ENCODE measurements at regions of chr1 and their contacts with region 1.

Region 1: GRCh38 chr1:198620951-198621824 is 17.7 kb upstream of the PTPRC start:
- DNase-seq: peak; percentile 65
- ATAC-seq: peak; percentile 72
- H3K4me3 Mint-ChIP-seq: peak overlapping the region; percentile 79
- H3K27ac Mint-ChIP-seq: peak overlapping the region; percentile 97
- H3K4me1 Mint-ChIP-seq: peaks cover 86% of the 10 kb centered on the region
- H3K27me3 Mint-ChIP-seq: no peaks in the 10 kb centered on the region
- CTCF ChIP-seq: no peak

Region 2: DNA sequence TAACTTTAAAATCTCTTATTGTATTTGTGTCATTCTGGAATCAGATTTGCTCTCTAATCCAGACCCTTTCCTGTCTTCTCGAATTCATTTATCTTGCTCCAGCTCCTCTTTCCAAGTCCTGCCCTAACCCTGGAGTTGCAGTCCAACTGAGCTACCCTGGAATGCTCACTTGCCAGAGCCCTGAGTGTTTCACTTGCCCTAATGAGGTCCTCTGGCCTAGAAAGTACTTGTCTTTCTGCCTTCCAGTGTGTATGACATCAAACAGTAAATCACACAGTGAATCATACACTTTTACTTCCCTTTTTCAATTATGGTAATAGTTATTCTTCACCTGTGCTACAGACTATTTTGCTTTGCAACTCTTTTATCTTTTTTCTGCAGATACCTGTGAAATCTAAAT is 367.5 kb before region 1 on chr1:
- CTCF ChIA-PET with region 1: no interaction called
- POLR2A ChIA-PET with region 1: no interaction called
- intact Hi-C with region 1: loop called (anchors 10 kb)
- DNase-seq: no peak
- ATAC-seq: peak; percentile 94
- H3K4me3 Mint-ChIP-seq: peak overlapping the region; percentile 59
- H3K27ac Mint-ChIP-seq: peak overlapping the region; percentile 79
- H3K4me1 Mint-ChIP-seq: peaks cover 24% of the 10 kb centered on the region
- H3K27me3 Mint-ChIP-seq: no peaks in the 10 kb centered on the region
- CTCF ChIP-seq: no peak

Region 3: DNA sequence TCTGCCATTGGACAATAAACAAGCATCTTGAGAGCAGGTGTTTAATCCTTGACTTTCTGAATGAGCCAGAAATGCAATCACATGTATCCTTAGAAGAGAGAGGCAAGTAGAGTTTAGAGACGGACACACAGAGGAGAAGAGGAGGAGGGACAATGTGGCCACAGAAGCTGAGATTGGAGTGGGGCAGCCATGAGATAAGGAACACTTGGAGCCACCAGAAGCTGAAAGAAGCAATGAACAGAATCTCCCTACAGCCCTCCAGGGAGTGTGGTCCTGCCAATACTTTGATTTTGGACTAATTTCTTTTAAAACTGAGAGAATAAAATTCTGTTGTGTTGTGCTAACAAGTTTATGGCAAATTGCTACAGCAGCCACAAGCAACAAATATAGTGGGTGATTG is 221.7 kb before region 1 on chr1:
- CTCF ChIA-PET with region 1: no interaction called
- POLR2A ChIA-PET with region 1: no interaction called
- intact Hi-C with region 1: no loop called
- DNase-seq: no peak
- ATAC-seq: no peak
- H3K4me3 Mint-ChIP-seq: no peak overlapping the region
- H3K27ac Mint-ChIP-seq: no peak overlapping the region
- H3K4me1 Mint-ChIP-seq: no peaks in the 10 kb centered on the region
- H3K27me3 Mint-ChIP-seq: peaks cover 18% of the 10 kb centered on the region
- CTCF ChIP-seq: no peak

Region 4: DNA sequence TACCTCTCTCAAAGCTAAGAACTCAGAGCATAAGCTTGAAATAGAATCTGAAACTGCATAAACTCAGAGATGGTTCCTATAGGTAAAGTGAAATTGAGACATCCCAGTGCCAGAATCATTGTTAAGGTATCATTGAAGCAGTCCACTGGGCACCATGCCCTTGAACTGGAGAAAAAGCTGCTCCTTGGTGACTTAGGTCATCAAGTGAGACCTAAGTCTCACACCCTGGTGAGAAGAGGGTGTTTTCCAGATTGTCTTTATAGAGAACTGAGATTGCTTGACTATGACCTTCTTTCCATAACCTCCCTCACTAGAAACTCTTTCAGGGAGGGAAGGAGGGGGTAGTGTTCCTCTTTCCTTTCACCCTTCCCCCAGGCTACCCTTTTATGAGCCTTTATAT is 71.3 kb before region 1 on chr1:
- CTCF ChIA-PET with region 1: no interaction called
- POLR2A ChIA-PET with region 1: interaction called, 40 read pairs
- intact Hi-C with region 1: no loop called
- DNase-seq: no peak
- ATAC-seq: peak; percentile 90
- H3K4me3 Mint-ChIP-seq: peak overlapping the region; percentile 63
- H3K27ac Mint-ChIP-seq: peak overlapping the region; percentile 89
- H3K4me1 Mint-ChIP-seq: peaks cover 67% of the 10 kb centered on the region
- H3K27me3 Mint-ChIP-seq: no peaks in the 10 kb centered on the region
- CTCF ChIP-seq: no peak

Region 5: GRCh38 chr1:198598796-198599321 is 22.3 kb before region 1 on chr1:
- CTCF ChIA-PET with region 1: interaction called, 30 read pairs
- POLR2A ChIA-PET with region 1: interaction called, 121 read pairs
- intact Hi-C with region 1: loop called (anchors 1 kb)
- DNase-seq: peak; percentile 40
- ATAC-seq: peak; percentile 76
- H3K4me3 Mint-ChIP-seq: peak overlapping the region; percentile 90
- H3K27ac Mint-ChIP-seq: peak overlapping the region; percentile 99
- H3K4me1 Mint-ChIP-seq: peaks cover 90% of the 10 kb centered on the region
- H3K27me3 Mint-ChIP-seq: no peaks in the 10 kb centered on the region
- CTCF ChIP-seq: no peak

Region 6: GRCh38 chr1:198638894-198639635 is 17.9 kb after region 1 on chr1 and contains the start of gene PTPRC:
- CTCF ChIA-PET with region 1: interaction called, 46 read pairs
- POLR2A ChIA-PET with region 1: interaction called, 307 read pairs
- intact Hi-C with region 1: loop called (anchors 1 kb)
- DNase-seq: no peak
- ATAC-seq: peak; percentile 78
- H3K4me3 Mint-ChIP-seq: peak within 1 kb of the TSS; percentile 87
- H3K27ac Mint-ChIP-seq: peak within 1 kb of the TSS; percentile 95
- H3K4me1 Mint-ChIP-seq: peaks cover 68% of the 10 kb centered on the region
- H3K27me3 Mint-ChIP-seq: no peaks in the 10 kb centered on the region
- CTCF ChIP-seq: no peak
- total RNA-seq, gene PTPRC: 426 and 506 TPM in 2 replicates

Region 7: GRCh38 chr1:198662821-198663220 is 41.6 kb after region 1 on chr1:
- CTCF ChIA-PET with region 1: interaction called, 5 read pairs
- POLR2A ChIA-PET with region 1: interaction called, 30 read pairs
- intact Hi-C with region 1: no loop called
- DNase-seq: no peak
- ATAC-seq: no peak
- H3K4me3 Mint-ChIP-seq: peak overlapping the region; percentile 24
- H3K27ac Mint-ChIP-seq: peak overlapping the region; percentile 73
- H3K4me1 Mint-ChIP-seq: peaks cover 79% of the 10 kb centered on the region
- H3K27me3 Mint-ChIP-seq: no peaks in the 10 kb centered on the region
- CTCF ChIP-seq: no peak

Region 8: GRCh38 chr1:198756470-198756869 is 135.3 kb after region 1 on chr1:
- CTCF ChIA-PET with region 1: no interaction called
- POLR2A ChIA-PET with region 1: no interaction called
- intact Hi-C with region 1: no loop called
- DNase-seq: no peak
- ATAC-seq: no peak
- H3K4me3 Mint-ChIP-seq: no peak overlapping the region
- H3K27ac Mint-ChIP-seq: peak overlapping the region; percentile 0
- H3K4me1 Mint-ChIP-seq: peaks cover 30% of the 10 kb centered on the region
- H3K27me3 Mint-ChIP-seq: no peaks in the 10 kb centered on the region
- CTCF ChIP-seq: no peak

Region 9: DNA sequence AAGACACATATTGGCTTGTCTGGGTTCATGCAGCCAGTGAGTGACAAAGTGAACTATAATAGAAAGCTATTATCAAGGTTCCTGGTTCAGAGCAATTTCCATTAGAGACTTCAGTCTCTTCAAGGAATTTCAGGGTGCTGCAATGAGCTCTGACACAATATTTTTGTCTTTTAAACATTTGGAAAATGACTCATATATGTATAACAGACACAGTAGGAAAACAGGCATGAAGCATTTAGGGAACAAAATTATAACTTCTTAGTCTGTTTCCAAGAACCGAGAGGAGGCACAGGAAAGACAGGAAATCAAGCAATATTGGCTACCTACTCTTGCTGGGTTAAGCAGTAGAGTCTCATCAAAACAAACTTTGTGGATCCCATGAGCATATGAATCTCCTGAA is 188.1 kb after region 1 on chr1:
- CTCF ChIA-PET with region 1: no interaction called
- POLR2A ChIA-PET with region 1: no interaction called
- intact Hi-C with region 1: no loop called
- DNase-seq: no peak
- ATAC-seq: no peak
- H3K4me3 Mint-ChIP-seq: no peak overlapping the region
- H3K27ac Mint-ChIP-seq: no peak overlapping the region
- H3K4me1 Mint-ChIP-seq: no peaks in the 10 kb centered on the region
- H3K27me3 Mint-ChIP-seq: peaks cover 1% of the 10 kb centered on the region
- CTCF ChIP-seq: no peak

Measured in activated B cell treated with CpG ODN at 0.5 μM for 24 hours (primary cell).